Naive thymus-derived CD4-positive, alpha-beta T cell (primary cell): ENCODE measurements at regions of chr11 and their contacts with region 1.

Region 1: DNA sequence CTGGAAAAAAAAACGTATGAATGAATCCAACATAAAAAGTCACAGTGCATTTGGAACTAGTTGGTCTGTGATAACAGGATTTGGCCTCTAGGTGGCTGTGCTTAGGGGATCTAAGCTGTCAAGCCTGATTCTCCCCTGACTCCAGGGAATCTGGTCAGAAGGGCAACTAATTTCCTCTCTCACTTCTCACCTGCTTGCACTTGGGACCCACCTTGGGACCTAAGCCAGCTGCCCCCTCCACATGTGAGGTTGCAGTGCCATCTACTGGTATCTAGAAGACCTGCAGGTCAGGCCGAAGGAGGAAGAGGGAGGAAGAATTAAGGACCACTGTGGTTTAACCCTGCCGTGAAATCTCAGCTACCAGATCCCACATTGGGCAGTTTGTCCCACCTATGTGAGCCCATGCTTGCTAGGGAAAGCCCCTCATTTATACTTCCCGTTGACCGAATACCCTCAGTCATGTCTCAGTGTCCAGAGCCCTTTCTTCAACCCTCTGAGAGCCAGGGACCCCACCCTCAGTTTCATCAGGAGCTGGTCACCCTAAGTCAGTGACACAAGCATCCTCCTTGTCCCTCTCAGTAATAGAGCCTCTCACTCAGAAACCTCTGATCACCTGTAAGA is 33.2 kb upstream of the CAVIN3 start:
- DNase-seq: peak in 8 of 9 donors; percentile 23 to 64 (median 53)
- ATAC-seq: peak; percentile 79
- H3K4me3 ChIP-seq: no peak overlapping the region
- H3K4me3 Mint-ChIP-seq: no peak overlapping the region
- H3K27ac ChIP-seq: no peak overlapping the region
- H3K27ac Mint-ChIP-seq: peak overlapping the region in 2 of 9 donors; percentile 42 to 66
- H3K4me1 ChIP-seq: no peaks in the 10 kb centered on the region
- H3K4me1 Mint-ChIP-seq: peaks cover 0 to 12% (median 0%) of the 10 kb centered on the region in 7 donors
- H3K27me3 ChIP-seq: no peaks in the 10 kb centered on the region
- H3K27me3 Mint-ChIP-seq: peaks cover 0 to 8% (median 0%) of the 10 kb centered on the region in 5 donors

Region 2: GRCh38 chr11:5992604-5993251 is 360.7 kb before region 1 on chr11:
- CTCF ChIA-PET with region 1: no interaction called
- POLR2A ChIA-PET with region 1: no interaction called
- intact Hi-C with region 1: loop called (anchors 1 kb)
- DNase-seq: no peak
- ATAC-seq: no peak
- H3K4me3 ChIP-seq: no peak overlapping the region
- H3K4me3 Mint-ChIP-seq: no peak overlapping the region
- H3K27ac ChIP-seq: no peak overlapping the region
- H3K27ac Mint-ChIP-seq: no peak overlapping the region
- H3K4me1 ChIP-seq: no peaks in the 10 kb centered on the region
- H3K4me1 Mint-ChIP-seq: no peaks in the 10 kb centered on the region
- H3K27me3 ChIP-seq: peaks cover 0 to 6% of the 10 kb centered on the region in 2 donors
- H3K27me3 Mint-ChIP-seq: peaks cover 14 to 25% (median 21%) of the 10 kb centered on the region in 5 donors

Region 3: GRCh38 chr11:6022956-6023355 is 330.5 kb before region 1 on chr11:
- CTCF ChIA-PET with region 1: interaction called, 11 read pairs
- POLR2A ChIA-PET with region 1: no interaction called
- intact Hi-C with region 1: loop called in 1 of 2 experiments (anchors 1 kb)
- DNase-seq: peak in 5 of 9 donors; percentile 10 to 31 (median 24)
- ATAC-seq: peak; percentile 75
- H3K4me3 ChIP-seq: no peak overlapping the region
- H3K4me3 Mint-ChIP-seq: no peak overlapping the region
- H3K27ac ChIP-seq: no peak overlapping the region
- H3K27ac Mint-ChIP-seq: no peak overlapping the region
- H3K4me1 ChIP-seq: no peaks in the 10 kb centered on the region
- H3K4me1 Mint-ChIP-seq: no peaks in the 10 kb centered on the region
- H3K27me3 ChIP-seq: no peaks in the 10 kb centered on the region
- H3K27me3 Mint-ChIP-seq: peaks cover 30 to 50% (median 35%) of the 10 kb centered on the region in 5 donors

Region 4: DNA sequence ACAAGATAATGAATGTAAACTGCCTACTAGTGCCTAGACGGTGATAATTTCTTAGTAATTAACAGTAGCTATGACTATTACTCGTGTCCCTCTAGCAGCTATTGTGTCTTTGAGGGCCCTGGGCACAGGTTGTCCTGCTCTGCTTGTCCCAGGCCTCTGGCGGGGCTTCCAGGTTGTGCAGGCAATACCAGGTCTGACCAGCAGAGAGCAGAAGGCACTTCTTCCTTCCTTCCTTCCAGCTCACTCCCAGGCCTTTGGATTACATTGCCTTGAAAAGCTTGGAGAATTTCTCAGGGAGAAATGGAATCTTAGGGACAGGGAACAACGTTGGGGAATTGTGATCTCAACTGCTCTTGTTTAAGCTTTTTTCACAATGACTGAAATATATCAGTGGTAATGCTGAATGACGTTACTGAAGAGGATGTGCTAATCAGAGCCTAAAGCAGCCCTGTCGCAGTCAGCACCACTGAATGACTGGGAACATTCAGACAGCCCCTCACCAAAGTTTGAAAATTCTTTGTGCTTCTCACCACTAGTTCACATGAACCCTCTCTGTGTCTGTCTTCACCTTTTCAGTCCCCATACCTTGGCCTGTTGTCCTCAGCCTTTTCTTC is 102.2 kb before region 1 on chr11:
- CTCF ChIA-PET with region 1: interaction called, 27 read pairs
- POLR2A ChIA-PET with region 1: no interaction called
- intact Hi-C with region 1: loop called (anchors 1 kb)
- DNase-seq: peak in 5 of 9 donors; percentile 21 to 51 (median 27)
- ATAC-seq: peak; percentile 71
- H3K4me3 ChIP-seq: no peak overlapping the region
- H3K4me3 Mint-ChIP-seq: no peak overlapping the region
- H3K27ac ChIP-seq: no peak overlapping the region
- H3K27ac Mint-ChIP-seq: no peak overlapping the region
- H3K4me1 ChIP-seq: no peaks in the 10 kb centered on the region
- H3K4me1 Mint-ChIP-seq: no peaks in the 10 kb centered on the region
- H3K27me3 ChIP-seq: no peaks in the 10 kb centered on the region
- H3K27me3 Mint-ChIP-seq: peaks cover 0 to 17% (median 0%) of the 10 kb centered on the region in 5 donors

Region 5: GRCh38 chr11:6298605-6299004 is 54.9 kb before region 1 on chr11:
- CTCF ChIA-PET with region 1: no interaction called
- POLR2A ChIA-PET with region 1: no interaction called
- intact Hi-C with region 1: loop called (anchors 1 to 5 kb)
- DNase-seq: no peak
- ATAC-seq: no peak
- H3K4me3 ChIP-seq: no peak overlapping the region
- H3K4me3 Mint-ChIP-seq: no peak overlapping the region
- H3K27ac ChIP-seq: no peak overlapping the region
- H3K27ac Mint-ChIP-seq: no peak overlapping the region
- H3K4me1 ChIP-seq: no peaks in the 10 kb centered on the region
- H3K4me1 Mint-ChIP-seq: no peaks in the 10 kb centered on the region
- H3K27me3 ChIP-seq: no peaks in the 10 kb centered on the region
- H3K27me3 Mint-ChIP-seq: peaks cover 8 to 30% (median 20%) of the 10 kb centered on the region in 5 donors

Region 6: GRCh38 chr11:6315811-6316425 is 37.6 kb before region 1 on chr11:
- CTCF ChIA-PET with region 1: no interaction called
- POLR2A ChIA-PET with region 1: interaction called, 3 read pairs
- intact Hi-C with region 1: loop called in 1 of 2 experiments (anchors 2 kb)
- DNase-seq: peak in 5 of 9 donors; percentile 7 to 38 (median 10)
- ATAC-seq: peak; percentile 77
- H3K4me3 ChIP-seq: no peak overlapping the region
- H3K4me3 Mint-ChIP-seq: no peak overlapping the region
- H3K27ac ChIP-seq: no peak overlapping the region
- H3K27ac Mint-ChIP-seq: no peak overlapping the region
- H3K4me1 ChIP-seq: no peaks in the 10 kb centered on the region
- H3K4me1 Mint-ChIP-seq: peaks cover 0 to 22% (median 10%) of the 10 kb centered on the region in 7 donors
- H3K27me3 ChIP-seq: peaks cover 2 to 4% of the 10 kb centered on the region in 2 donors
- H3K27me3 Mint-ChIP-seq: peaks cover 40 to 57% (median 54%) of the 10 kb centered on the region in 5 donors

Region 7: DNA sequence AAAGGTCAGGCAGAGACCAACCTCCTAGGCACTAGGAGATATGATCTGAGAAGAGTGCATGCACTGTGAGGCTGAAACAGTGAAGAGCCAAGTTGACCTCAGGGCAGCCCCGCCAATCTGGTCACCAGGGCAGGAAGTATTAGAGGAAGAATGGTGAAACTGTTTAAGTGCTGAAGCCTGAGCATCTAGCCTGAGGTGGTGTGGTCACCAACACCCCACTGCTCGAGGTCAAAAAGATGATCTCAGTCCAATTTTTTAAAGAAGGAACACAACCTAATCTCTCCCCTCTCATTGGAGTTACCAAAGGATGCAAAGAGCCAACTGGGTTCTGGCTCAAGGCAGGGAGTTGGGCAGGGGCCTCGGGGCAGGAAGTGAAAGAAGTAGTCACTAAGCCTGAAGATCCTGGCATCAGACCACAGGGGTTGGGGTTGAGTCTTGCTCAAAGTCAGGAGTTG is 61.4 kb after region 1 on chr11:
- CTCF ChIA-PET with region 1: no interaction called
- POLR2A ChIA-PET with region 1: no interaction called
- intact Hi-C with region 1: no loop called
- DNase-seq: peak in 1 of 9 donors; percentile 16
- ATAC-seq: peak; percentile 7
- H3K4me3 ChIP-seq: peak overlapping the region; percentile 43
- H3K4me3 Mint-ChIP-seq: no peak overlapping the region
- H3K27ac ChIP-seq: peak overlapping the region; percentile 74
- H3K27ac Mint-ChIP-seq: no peak overlapping the region
- H3K4me1 ChIP-seq: peaks cover 31 to 78% of the 10 kb centered on the region in 2 donors
- H3K4me1 Mint-ChIP-seq: peaks cover 5 to 30% (median 12%) of the 10 kb centered on the region in 7 donors
- H3K27me3 ChIP-seq: no peaks in the 10 kb centered on the region
- H3K27me3 Mint-ChIP-seq: peaks cover 0 to 2% (median 0%) of the 10 kb centered on the region in 5 donors